Activated CD4-positive, alpha-beta memory T cell treated with anti-CD3 and anti-CD28 coated beads, Interleukin-2, amount 10 ng/mL, durations not matched to agents 7 days and 5 days (primary cell): ENCODE measurements at regions of chr14 and their contacts with region 1.

Region 1: DNA sequence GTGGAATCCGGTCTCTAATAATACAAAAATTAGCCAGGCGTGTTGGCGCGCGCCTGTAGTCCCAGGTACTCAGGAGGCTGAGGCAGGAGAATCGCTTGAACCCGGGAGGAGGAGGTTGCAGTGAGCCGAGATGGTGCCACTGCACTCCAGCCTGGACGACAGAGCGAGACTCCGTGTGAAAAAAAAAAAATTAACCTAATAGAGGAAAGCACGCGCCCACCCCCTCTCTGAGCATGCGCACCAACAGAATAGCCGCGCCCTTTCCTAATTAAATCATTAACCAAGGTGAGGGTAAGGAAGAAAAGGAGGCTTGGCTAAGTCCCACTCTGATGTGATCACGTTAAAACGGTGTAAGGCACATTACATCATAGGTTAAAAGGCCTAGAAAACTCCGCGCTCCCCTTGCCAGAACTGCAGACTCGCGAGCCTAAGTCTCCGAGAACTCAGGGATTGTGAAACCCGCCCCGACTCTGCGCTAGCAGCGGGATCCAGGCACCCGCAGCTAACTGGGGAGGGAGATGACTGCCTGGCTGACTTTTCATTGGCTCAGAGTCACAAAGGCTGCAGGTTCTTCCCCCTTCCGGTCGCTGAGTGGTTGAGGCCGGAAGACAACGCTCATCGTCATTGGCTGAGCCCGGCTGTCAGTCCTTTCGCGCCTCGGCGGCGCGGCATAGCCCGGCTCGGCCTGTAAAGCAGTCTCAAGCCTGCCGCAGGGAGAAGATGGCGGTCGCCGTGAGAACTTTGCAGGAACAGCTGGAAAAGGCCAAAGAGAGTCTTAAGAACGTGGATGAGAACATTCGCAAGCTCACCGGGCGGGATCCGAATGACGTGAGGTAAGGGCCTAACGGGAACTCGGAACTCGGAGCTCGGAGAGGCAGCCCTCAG is at the start of gene PNN:
- DNase-seq: peak; percentile 98
- H3K4me3 Mint-ChIP-seq: peak within 1 kb of the TSS; percentile 96
- H3K27ac Mint-ChIP-seq: peak within 1 kb of the TSS; percentile 94
- H3K4me1 Mint-ChIP-seq: peaks cover 57% of the 10 kb centered on the region
- H3K27me3 Mint-ChIP-seq: no peaks in the 10 kb centered on the region
- total RNA-seq, gene PNN: 75.0 to 75.3 TPM

Region 2: DNA sequence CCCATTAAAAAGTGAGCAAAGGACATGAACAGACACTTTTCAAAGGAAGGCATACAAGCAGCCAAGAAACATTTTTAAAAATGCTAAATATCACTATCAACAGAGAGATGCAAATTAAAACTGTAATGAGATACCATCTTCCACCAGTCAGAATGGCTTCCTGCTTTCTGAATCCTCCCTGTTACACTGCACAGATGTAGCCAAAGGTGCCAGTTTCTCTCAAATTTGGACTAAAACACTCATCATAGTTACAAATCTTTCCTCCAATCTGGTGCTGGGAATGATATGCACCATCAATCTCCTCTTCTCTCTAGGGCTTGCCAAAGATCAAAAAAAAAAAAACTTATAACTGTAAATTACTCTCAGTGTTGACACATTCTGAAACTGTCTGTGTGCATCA is 607.1 kb before region 1 on chr14:
- CTCF ChIA-PET with region 1: no interaction called
- POLR2A ChIA-PET with region 1: no interaction called
- DNase-seq: no peak
- H3K4me3 Mint-ChIP-seq: no peak overlapping the region
- H3K27ac Mint-ChIP-seq: no peak overlapping the region
- H3K4me1 Mint-ChIP-seq: peaks cover 7% of the 10 kb centered on the region
- H3K27me3 Mint-ChIP-seq: no peaks in the 10 kb centered on the region

Region 3: DNA sequence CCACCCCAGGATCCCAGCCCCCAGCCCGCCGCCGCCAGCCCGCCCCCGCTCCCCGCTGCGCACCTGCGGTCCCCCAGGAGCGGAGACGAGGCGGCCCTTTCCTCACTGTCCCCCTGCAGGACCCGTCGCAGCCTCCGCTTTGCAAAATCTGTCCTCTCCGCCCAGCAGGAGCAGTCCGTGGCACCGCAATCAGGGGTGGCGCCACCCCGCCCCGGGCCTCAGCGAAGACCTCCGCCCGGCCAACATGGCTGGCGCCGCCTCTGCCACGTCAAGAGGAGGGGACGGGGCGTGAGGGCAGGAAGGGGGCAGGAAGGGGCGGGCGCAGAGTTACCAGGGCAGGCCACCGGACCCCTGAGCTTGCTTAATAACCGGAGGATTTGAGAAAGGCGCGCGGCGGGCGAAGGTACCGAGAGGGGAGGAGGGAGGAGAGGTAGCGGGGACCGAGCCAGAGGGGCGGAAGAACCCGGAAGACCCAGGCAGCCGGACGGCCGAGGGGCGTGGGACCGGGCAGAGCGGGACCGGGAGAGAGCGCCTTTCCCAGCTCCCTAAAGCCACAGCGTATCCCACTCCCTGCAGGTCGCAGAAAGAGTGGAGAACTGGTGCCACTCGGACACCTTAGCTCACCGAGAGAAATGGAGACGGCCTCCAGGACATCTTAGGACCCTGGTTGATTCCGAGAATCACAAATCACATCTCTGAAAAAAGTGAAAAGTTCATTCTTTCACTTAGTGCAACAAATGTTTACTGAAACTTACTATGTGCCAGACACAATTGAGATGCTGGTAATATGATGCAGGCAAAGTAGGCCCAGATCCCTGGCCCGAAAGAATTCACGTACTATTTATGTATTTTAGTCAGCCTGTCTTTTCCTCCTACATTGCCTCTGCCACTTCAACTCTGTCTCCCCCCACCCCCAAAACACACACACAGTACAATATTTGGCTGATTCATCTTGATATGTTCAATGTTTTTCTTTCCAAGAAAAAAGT is 71.5 kb before region 1 on chr14 and contains the start of gene SEC23A:
- CTCF ChIA-PET with region 1: interaction called, 6 read pairs
- POLR2A ChIA-PET with region 1: interaction called, 38 read pairs
- DNase-seq: peak; percentile 88
- H3K4me3 Mint-ChIP-seq: peak within 1 kb of the TSS; percentile 97
- H3K27ac Mint-ChIP-seq: peak within 1 kb of the TSS; percentile 91
- H3K4me1 Mint-ChIP-seq: peaks cover 47% of the 10 kb centered on the region
- H3K27me3 Mint-ChIP-seq: no peaks in the 10 kb centered on the region
- total RNA-seq, gene SEC23A: 59.7 to 69.0 TPM

Region 4: GRCh38 chr14:39186941-39187525 is 12.2 kb after region 1 on chr14:
- CTCF ChIA-PET with region 1: no interaction called
- POLR2A ChIA-PET with region 1: interaction called, 21 read pairs
- DNase-seq: no peak
- H3K4me3 Mint-ChIP-seq: no peak overlapping the region
- H3K27ac Mint-ChIP-seq: no peak overlapping the region
- H3K4me1 Mint-ChIP-seq: peaks cover 30% of the 10 kb centered on the region
- H3K27me3 Mint-ChIP-seq: no peaks in the 10 kb centered on the region

Region 5: GRCh38 chr14:39266871-39267591 is 92.2 kb after region 1 on chr14:
- CTCF ChIA-PET with region 1: interaction called, 5 read pairs
- POLR2A ChIA-PET with region 1: interaction called, 46 read pairs
- DNase-seq: peak; percentile 84
- H3K4me3 Mint-ChIP-seq: peak overlapping the region; percentile 73
- H3K27ac Mint-ChIP-seq: peak overlapping the region; percentile 94
- H3K4me1 Mint-ChIP-seq: peaks cover 50% of the 10 kb centered on the region
- H3K27me3 Mint-ChIP-seq: no peaks in the 10 kb centered on the region

Region 6: DNA sequence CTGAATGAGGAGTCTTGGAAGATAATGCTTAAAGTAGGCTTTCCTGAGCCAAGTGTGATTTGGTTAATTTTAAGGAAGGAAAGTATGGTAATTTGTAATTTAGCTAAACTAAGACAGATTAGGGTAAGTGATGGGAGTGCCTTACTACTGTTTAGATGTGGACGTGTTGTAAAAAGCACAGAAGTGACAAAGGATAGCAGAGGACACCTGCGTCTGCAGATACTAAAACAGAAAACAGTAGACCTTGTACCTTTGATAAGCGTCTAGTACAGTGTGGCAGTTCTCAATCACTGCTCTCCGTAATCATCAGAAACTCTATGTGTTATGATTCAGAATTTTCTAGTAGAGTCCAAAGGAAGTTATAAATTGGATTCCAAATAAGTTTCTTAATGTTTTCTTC is 116.9 kb after region 1 on chr14:
- CTCF ChIA-PET with region 1: no interaction called
- POLR2A ChIA-PET with region 1: no interaction called
- DNase-seq: no peak
- H3K4me3 Mint-ChIP-seq: no peak overlapping the region
- H3K27ac Mint-ChIP-seq: no peak overlapping the region
- H3K4me1 Mint-ChIP-seq: no peaks in the 10 kb centered on the region
- H3K27me3 Mint-ChIP-seq: no peaks in the 10 kb centered on the region